GM10248 (cell line): ENCODE measurements at regions of chr2 and their contacts with region 1.

Region 1: DNA sequence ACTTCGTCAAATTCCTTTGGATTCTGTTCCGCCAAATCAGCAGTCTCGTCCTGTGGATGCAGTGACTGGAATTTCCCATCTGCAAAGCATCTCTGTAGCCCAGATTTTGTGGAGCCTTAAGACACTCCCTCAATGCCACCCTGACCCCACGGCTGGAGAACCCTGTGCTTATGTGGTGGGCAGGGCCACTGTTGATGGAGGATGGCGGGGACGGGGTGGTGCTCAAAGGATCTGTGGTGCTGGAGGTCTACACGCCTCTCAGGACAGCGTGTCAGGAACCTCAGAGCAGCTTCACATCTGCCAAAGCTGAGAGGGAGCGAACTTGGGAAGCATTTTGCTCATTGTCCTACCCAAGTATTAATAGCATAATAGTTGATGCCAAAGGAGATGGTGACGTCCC is 200.1 kb downstream of the MGAT5 start:
- DNase-seq: no peak
- CTCF ChIP-seq: no peak

Region 2: DNA sequence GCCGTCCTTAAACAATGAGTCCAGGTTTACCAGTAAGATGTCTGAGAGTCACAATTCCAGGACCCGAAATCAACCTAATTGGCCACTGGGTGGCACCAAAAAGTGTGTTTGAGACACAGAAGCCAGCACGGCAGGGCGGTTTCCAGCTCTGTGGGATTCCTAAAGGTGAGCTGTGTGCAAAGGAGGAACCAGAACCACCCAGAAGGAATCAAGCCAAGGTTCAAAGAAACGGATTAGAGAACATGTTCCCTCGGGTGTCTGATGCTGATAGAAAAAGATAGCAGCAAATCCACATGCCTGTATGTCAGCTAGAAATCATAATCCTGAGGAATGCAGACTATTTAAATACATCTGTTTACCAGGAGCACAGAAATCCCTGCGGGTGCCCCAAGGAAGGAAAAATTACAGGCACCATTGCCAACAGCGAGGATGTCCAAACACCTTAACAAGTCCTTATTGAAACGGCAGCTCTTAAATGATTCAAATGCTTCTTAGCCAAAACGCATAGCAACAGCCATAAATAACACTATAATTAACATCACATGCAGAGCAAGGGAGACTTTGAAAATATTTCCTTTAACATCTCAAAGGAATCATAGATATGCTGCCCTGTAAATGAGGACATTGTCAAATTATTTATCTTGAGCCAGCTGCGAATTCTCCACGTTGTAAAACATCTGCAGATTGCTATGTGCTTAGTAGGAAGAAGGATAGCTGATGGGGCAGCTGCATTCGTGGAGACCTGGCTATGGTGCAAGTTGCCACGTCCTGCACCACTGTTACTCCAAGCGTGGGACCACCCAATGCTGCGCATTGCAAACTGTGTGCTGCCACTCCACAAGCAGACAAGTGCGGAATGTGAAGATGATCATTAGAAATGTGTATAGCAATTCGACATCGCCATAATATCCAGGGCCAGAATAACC is 567.0 kb before region 1 on chr2:
- CTCF ChIA-PET with region 1: interaction called, 34 read pairs
- POLR2A ChIA-PET with region 1: no interaction called
- DNase-seq: peak; percentile 69
- CTCF ChIP-seq: peak; percentile 68

Region 3: GRCh38 chr2:134161170-134161547 is 292.8 kb before region 1 on chr2:
- CTCF ChIA-PET with region 1: no interaction called
- POLR2A ChIA-PET with region 1: no interaction called
- DNase-seq: no peak
- CTCF ChIP-seq: no peak

Region 4: GRCh38 chr2:134466141-134466540 is 12.2 kb after region 1 on chr2:
- CTCF ChIA-PET with region 1: interaction called, 36 read pairs
- POLR2A ChIA-PET with region 1: no interaction called
- DNase-seq: no peak
- CTCF ChIP-seq: peak; percentile 61

Region 5: GRCh38 chr2:134491771-134492441 is 37.9 kb after region 1 on chr2:
- CTCF ChIA-PET with region 1: no interaction called
- POLR2A ChIA-PET with region 1: no interaction called
- DNase-seq: no peak
- CTCF ChIP-seq: no peak

Region 6: GRCh38 chr2:134897932-134898331 is 444.0 kb after region 1 on chr2:
- CTCF ChIA-PET with region 1: interaction called, 12 read pairs
- POLR2A ChIA-PET with region 1: no interaction called
- DNase-seq: no peak
- CTCF ChIP-seq: peak; percentile 31